Activated CD8-positive, alpha-beta memory T cell treated with anti-CD3 and anti-CD28 coated beads, Interleukin-2, amount 10 ng/mL, durations not matched to agents 7 days and 5 days (primary cell): ENCODE measurements at regions of chr19 and their contacts with region 1.

Region 1: GRCh38 chr19:14048443-14049153 is 13.3 kb downstream of the PALM3 start:
- DNase-seq: peak; percentile 79
- ATAC-seq: peak; percentile 79
- H3K4me3 Mint-ChIP-seq: no peak overlapping the region
- H3K27ac Mint-ChIP-seq: no peak overlapping the region
- H3K4me1 Mint-ChIP-seq: peaks cover 2% of the 10 kb centered on the region
- H3K27me3 Mint-ChIP-seq: no peaks in the 10 kb centered on the region

Region 2: DNA sequence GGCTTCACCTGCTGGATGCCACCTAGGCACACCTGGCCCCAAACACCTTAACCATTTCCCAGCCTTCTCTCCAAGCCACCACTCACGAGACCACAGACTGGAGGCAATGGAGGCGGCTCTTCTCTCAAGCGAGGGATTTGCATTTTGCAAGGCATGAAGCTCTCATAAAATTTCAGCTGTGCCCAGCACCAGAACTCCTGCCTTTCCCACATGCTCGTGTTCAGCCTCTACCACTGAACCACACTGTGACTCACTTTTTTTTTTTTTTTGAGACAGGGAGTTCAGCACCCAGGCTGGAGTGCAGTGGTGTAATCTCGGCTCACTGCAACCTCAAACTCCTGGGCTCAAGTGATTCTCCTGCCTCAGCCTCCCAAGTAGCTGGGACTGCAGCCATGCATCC is 161.1 kb before region 1 on chr19:
- CTCF ChIA-PET with region 1: interaction called, 25 read pairs
- DNase-seq: peak; percentile 48
- ATAC-seq: peak; percentile 43
- H3K4me3 Mint-ChIP-seq: peak overlapping the region; percentile 51
- H3K27ac Mint-ChIP-seq: peak overlapping the region; percentile 68
- H3K4me1 Mint-ChIP-seq: peaks cover 38% of the 10 kb centered on the region
- H3K27me3 Mint-ChIP-seq: peaks cover 9% of the 10 kb centered on the region

Region 3: GRCh38 chr19:13926715-13927114 is 121.9 kb before region 1 on chr19:
- CTCF ChIA-PET with region 1: no interaction called
- DNase-seq: no peak
- ATAC-seq: no peak
- H3K4me3 Mint-ChIP-seq: no peak overlapping the region
- H3K27ac Mint-ChIP-seq: no peak overlapping the region
- H3K4me1 Mint-ChIP-seq: no peaks in the 10 kb centered on the region
- H3K27me3 Mint-ChIP-seq: no peaks in the 10 kb centered on the region

Region 4: GRCh38 chr19:13952154-13953035 is 96.2 kb before region 1 on chr19 and contains the start of gene DCAF15:
- CTCF ChIA-PET with region 1: interaction called, 10 read pairs
- DNase-seq: peak; percentile 100
- ATAC-seq: peak; percentile 99
- H3K4me3 Mint-ChIP-seq: peak within 1 kb of the TSS; percentile 92
- H3K27ac Mint-ChIP-seq: peak within 1 kb of the TSS; percentile 81
- H3K4me1 Mint-ChIP-seq: peaks cover 23% of the 10 kb centered on the region
- H3K27me3 Mint-ChIP-seq: no peaks in the 10 kb centered on the region
- total RNA-seq, gene DCAF15: 82.5 to 94.3 TPM

Region 5: DNA sequence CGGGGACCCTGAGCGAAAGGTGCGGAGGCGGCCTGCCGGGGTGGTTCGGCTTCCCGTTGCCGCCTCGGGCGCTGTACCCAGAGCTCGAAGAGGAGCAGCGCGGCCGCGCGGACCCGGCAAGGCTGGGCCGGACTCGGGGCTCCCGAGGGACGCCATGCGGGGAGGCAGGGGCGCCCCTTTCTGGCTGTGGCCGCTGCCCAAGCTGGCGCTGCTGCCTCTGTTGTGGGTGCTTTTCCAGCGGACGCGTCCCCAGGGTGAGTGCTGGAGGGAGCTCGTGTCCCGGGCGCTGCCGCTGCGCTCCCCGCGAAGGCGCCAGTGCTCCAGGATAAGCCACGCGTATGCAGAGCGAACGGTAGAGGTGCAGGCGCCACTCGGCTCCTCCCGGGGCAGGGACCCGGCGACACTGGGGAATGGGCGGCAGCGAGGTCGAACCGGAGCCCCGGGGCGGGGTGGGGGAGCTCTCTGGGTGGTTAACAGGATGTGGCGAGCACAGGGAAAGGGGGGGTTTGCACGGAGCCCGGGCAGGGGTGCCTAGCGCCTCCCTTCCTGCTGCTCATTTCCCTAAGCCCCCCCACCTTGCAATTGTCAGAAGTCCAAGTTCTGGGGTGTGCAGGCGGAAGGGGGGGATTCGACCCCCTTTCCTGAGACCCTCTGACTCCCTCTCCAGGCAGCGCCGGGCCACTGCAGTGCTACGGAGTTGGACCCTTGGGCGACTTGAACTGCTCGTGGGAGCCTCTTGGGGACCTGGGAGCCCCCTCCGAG is 16.7 kb before region 1 on chr19 and contains the start of gene IL27RA:
- CTCF ChIA-PET with region 1: interaction called, 11 read pairs
- DNase-seq: peak; percentile 88
- ATAC-seq: peak; percentile 85
- H3K4me3 Mint-ChIP-seq: peak within 1 kb of the TSS; percentile 90
- H3K27ac Mint-ChIP-seq: peak within 1 kb of the TSS; percentile 90
- H3K4me1 Mint-ChIP-seq: peaks cover 19% of the 10 kb centered on the region
- H3K27me3 Mint-ChIP-seq: peaks cover 6% of the 10 kb centered on the region
- total RNA-seq, gene IL27RA: 29.7 to 60.3 TPM